ENCODE measurements at regions of chr6 and their contacts with region 1.

Region 1: GRCh38 chr6:110039364-110039980 is 61.4 kb downstream of the GPR6 start:
- DNase-seq: peak; percentile 90
- H3K4me3 Mint-ChIP-seq: peak overlapping the region; percentile 72
- H3K27ac Mint-ChIP-seq: peak overlapping the region; percentile 90
- H3K4me1 Mint-ChIP-seq: peaks cover 14% of the 10 kb centered on the region
- H3K27me3 Mint-ChIP-seq: no peaks in the 10 kb centered on the region
- CTCF ChIP-seq: peak; percentile 80

Region 2: DNA sequence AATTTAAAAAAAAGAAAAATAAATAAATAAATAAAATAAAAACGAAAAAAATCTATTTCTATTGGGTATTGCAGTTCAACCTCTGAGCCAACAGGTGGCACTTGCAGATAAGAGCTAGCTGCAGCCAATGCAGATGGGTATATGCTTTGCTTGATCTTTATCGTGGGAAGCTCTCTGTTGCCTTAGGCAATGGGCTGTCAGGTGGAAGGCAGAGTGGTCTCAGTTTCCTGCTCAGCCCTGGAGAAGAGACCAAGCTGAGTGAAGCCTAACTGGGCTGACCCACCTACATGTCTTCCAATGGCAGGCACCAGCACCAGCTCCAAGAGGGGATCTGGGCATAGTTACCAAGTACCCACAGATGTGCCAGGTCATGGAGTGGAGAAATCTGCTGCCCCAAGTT is 443.5 kb before region 1 on chr6:
- CTCF ChIA-PET with region 1: interaction called, 17 read pairs
- intact Hi-C with region 1: no loop called
- DNase-seq: peak; percentile 27
- H3K4me3 Mint-ChIP-seq: no peak overlapping the region
- H3K27ac Mint-ChIP-seq: no peak overlapping the region
- H3K4me1 Mint-ChIP-seq: no peaks in the 10 kb centered on the region
- H3K27me3 Mint-ChIP-seq: peaks cover 7% of the 10 kb centered on the region
- CTCF ChIP-seq: peak; percentile 45

Region 3: DNA sequence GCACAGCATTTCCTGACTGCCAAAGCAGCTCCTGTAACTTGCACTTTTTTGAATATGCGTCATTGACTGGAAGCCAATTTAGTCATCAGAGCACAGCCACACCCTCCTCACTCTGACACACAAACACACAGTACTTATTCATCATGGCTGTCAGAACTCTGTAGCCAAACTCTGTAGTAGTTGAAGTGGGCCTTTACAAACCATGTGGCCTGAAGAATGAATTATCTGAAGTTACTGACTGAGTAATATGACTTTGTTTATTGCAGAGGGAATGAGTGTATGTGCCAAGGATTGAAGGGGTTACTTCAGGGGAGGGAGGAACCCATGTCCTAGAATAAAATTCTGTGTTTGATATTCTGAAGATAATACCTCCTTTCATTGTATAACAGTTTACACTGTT is 245.7 kb before region 1 on chr6:
- CTCF ChIA-PET with region 1: interaction called, 11 read pairs
- intact Hi-C with region 1: loop called (anchors 2 kb)
- DNase-seq: peak; percentile 60
- H3K4me3 Mint-ChIP-seq: no peak overlapping the region
- H3K27ac Mint-ChIP-seq: peak overlapping the region; percentile 81
- H3K4me1 Mint-ChIP-seq: peaks cover 26% of the 10 kb centered on the region
- H3K27me3 Mint-ChIP-seq: no peaks in the 10 kb centered on the region
- CTCF ChIP-seq: no peak

Region 4: DNA sequence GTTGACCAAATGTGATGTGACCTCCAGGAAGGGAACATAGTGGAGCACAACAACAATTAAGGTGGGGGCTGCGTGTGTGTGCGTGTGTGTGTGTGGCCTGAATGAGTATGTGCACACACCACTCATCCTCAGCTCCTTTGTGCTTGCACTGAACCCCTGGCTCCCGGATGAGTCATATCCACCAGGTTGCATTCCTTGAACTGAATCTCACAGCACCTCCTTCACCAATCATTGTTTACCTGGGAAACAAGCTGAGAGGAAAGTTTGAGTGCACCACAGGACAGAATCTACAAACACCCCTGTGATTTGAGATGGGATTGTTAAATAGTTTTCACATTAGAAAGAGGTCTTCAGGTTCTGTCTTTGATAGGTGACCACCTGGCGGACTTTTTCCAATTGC is 95.0 kb before region 1 on chr6:
- CTCF ChIA-PET with region 1: interaction called, 12 read pairs
- intact Hi-C with region 1: no loop called
- DNase-seq: peak; percentile 74
- H3K4me3 Mint-ChIP-seq: no peak overlapping the region
- H3K27ac Mint-ChIP-seq: peak overlapping the region; percentile 40
- H3K4me1 Mint-ChIP-seq: peaks cover 50% of the 10 kb centered on the region
- H3K27me3 Mint-ChIP-seq: no peaks in the 10 kb centered on the region
- CTCF ChIP-seq: no peak

Measured in Calu3 (cell line).